Aorta (tissue), 5 donors: ENCODE measurements at regions of chr5 and their contacts with region 1.

Region 1: DNA sequence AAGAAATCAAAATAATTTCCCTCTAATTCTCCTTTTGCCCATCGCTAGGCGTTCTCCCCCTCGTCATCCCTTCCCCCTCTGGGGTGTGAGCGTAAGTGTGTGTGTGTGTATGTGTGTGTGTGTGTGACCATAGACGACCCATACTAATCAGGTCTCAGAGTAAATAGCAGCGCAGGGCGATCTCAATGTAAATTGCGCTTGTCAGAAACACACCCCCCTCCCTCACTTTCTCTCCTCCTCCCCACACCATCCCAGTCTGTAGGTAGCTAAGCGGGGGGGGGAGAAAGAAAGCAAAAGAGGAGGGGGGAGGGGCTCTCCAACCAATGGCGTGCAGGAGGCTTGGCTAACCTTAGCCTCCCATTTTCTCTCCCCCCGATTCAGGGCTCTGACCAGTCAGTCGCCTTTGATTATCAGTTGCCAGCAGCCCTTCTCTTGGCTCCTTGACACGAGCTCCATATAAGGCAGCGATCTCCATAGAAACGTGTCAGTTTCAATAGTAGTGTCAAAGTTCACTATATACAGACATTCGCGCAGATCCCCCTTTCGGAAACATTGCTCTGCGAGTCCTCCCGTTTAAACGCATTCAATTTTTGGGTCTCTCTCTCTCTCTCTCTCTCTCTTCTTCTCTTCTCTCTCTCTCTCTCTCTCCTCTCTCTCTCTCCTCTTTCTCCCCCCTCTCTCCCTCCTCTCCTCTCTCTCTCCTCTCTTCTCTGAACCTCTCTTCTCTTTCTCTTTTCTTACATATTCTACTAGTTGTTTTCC is at the start of gene NR2F1:
- DNase-seq: peak in 1 of 2 donors; percentile 70
- ATAC-seq: peak; percentile 44
- H3K4me3 ChIP-seq: peak within 1 kb of the TSS; percentile 66 to 69
- H3K27ac ChIP-seq: no peak within 1 kb of the TSS
- H3K4me1 ChIP-seq: no peaks in the 10 kb centered on the region
- H3K27me3 ChIP-seq: no peaks in the 10 kb centered on the region
- total RNA-seq, gene NR2F1: 10.0 to 27.0 TPM

Region 2: GRCh38 chr5:93532370-93532769 is 50.5 kb before region 1 on chr5:
- intact Hi-C with region 1: no loop called
- DNase-seq: peak; percentile 31 to 49
- ATAC-seq: peak; percentile 91
- H3K4me3 ChIP-seq: no peak overlapping the region
- H3K27ac ChIP-seq: no peak overlapping the region
- H3K4me1 ChIP-seq: no peaks in the 10 kb centered on the region
- H3K27me3 ChIP-seq: no peaks in the 10 kb centered on the region

Region 3: DNA sequence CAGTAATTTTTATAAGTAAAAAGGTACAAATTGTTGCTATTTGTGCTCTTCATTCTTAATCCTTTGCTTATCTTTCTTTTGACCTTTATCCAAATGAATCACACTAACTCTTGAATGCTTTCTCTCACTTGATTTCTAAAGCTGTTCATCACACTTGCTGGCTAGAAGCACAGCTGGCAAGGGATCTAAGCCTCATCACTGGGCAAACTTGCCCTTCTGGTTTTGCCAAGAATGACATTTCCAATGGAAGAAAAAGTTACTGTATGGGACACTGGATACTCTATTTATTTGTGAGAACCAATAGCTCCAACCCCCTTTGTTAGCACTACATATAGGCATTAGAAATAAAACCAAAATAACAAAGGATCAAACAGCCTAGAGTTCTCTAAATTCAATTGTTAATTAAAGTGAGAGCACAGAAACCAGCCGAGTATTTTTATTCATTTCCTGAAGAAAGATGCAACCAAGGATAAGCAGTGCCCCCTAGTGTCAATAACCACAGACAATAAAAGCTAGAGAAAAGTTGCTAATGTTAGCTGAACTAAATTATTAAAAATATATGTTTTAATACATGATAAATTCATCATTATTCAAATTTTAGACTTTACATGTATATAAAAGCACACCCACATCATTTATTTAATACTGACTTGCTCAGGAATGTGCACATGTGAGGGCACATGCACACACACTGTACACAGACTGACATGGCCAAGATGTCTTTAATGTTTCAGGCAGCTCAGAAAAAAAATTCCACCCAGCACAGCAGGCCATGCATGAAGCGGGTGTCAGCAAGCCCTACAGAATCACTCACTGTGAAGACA is 218.3 kb after region 1 on chr5:
- intact Hi-C with region 1: loop called (anchors 5 kb)
- DNase-seq: no peak
- ATAC-seq: no peak
- H3K4me3 ChIP-seq: no peak overlapping the region
- H3K27ac ChIP-seq: no peak overlapping the region
- H3K4me1 ChIP-seq: no peaks in the 10 kb centered on the region
- H3K27me3 ChIP-seq: no peaks in the 10 kb centered on the region